CD14-positive monocyte (primary cell): ENCODE measurements at regions of chr16 and their contacts with region 1.

Region 1: GRCh38 chr16:30698139-30698815 is 694 bp upstream of the SRCAP start:
- DNase-seq: peak; percentile 95 to 98 (median 97)
- H3K4me3 ChIP-seq: peak overlapping the region; percentile 91 to 98 (median 94)
- H3K4me3 Mint-ChIP-seq: peak overlapping the region; percentile 92 to 99
- H3K27ac ChIP-seq: peak overlapping the region; percentile 96 to 97
- H3K27ac Mint-ChIP-seq: peak overlapping the region; percentile 99 to 100 (median 100)
- H3K4me1 ChIP-seq: peaks cover 25 to 42% of the 10 kb centered on the region in 2 donors
- H3K4me1 Mint-ChIP-seq: peaks cover 40% of the 10 kb centered on the region
- H3K27me3 ChIP-seq: no peaks in the 10 kb centered on the region
- H3K27me3 Mint-ChIP-seq: peaks cover 0 to 1% (median 0%) of the 10 kb centered on the region in 3 donors
- CTCF ChIP-seq: no peak

Region 2: GRCh38 chr16:30650369-30651123 is 47.7 kb before region 1 on chr16 and contains the start of gene PRR14:
- intact Hi-C with region 1: loop called in 1 of 2 experiments (anchors 2 kb)
- DNase-seq: peak; percentile 100
- H3K4me3 ChIP-seq: peak within 1 kb of the TSS; percentile 76 to 90 (median 84)
- H3K4me3 Mint-ChIP-seq: peak within 1 kb of the TSS; percentile 96 to 98
- H3K27ac ChIP-seq: peak within 1 kb of the TSS; percentile 97
- H3K27ac Mint-ChIP-seq: peak within 1 kb of the TSS; percentile 95 to 99 (median 98)
- H3K4me1 ChIP-seq: peaks cover 21 to 23% of the 10 kb centered on the region in 2 donors
- H3K4me1 Mint-ChIP-seq: peaks cover 28% of the 10 kb centered on the region
- H3K27me3 ChIP-seq: no peaks in the 10 kb centered on the region
- H3K27me3 Mint-ChIP-seq: peaks cover 0 to 3% (median 1%) of the 10 kb centered on the region in 3 donors
- CTCF ChIP-seq: no peak
- polyA plus RNA-seq, gene PRR14: 6.1 to 32.6 (median 10.4) TPM

Region 3: DNA sequence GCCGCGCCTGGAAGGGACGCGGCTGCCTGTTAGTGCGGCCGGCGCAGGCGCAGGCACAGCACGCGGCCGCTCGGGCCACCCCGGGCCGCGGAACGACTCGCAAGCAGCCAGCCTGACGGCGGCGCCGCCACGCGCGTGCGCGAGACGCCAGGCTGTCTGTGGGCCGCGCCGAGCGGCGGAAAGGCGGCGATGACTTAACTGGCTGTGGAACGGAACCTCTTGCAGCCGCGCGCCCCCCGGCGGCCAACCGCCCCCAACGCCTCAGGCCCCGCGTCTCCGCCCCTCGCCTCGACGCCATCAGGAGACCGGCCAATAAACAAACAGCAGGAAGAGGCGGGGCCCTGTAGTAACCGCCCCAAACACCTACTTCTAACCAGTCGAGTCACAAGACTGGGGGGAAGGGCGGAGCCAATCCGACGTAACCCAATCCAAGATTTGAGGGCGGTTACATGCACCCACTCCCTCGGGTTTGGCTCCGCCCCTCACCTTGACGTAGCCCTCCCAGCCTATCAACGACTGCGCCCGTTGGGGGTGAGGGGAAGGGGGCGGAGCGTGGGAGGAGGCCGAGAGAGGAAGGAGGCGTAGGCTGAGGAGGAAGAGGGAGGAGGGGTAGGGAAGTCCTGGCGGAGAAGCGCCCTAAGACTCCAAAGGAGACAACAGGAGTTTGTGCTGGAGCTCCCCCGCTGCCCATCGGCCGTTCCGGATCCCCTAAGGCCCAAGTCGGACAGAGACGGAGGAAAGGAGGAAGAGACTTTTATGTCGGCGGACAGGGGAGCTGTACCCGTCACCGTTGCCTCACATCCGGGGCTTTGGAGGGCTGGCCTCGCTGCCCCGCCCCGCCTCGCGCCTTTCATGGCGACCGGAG is 40.2 kb before region 1 on chr16 and contains the start of gene FBRS:
- intact Hi-C with region 1: loop called (anchors 1 to 2 kb)
- DNase-seq: peak; percentile 100
- H3K4me3 ChIP-seq: peak within 1 kb of the TSS; percentile 81 to 99 (median 86)
- H3K4me3 Mint-ChIP-seq: peak within 1 kb of the TSS; percentile 90 to 99
- H3K27ac ChIP-seq: peak within 1 kb of the TSS; percentile 93 to 99
- H3K27ac Mint-ChIP-seq: peak within 1 kb of the TSS; percentile 100
- H3K4me1 ChIP-seq: peaks cover 33 to 45% of the 10 kb centered on the region in 2 donors
- H3K4me1 Mint-ChIP-seq: peaks cover 38% of the 10 kb centered on the region
- H3K27me3 ChIP-seq: no peaks in the 10 kb centered on the region
- H3K27me3 Mint-ChIP-seq: peaks cover 0 to 1% (median 0%) of the 10 kb centered on the region in 3 donors
- CTCF ChIP-seq: peak; percentile 68
- polyA plus RNA-seq, gene FBRS: 1.4 to 44.8 (median 2.1) TPM

Region 4: GRCh38 chr16:30715737-30716445 is 17.6 kb after region 1 on chr16:
- intact Hi-C with region 1: loop called in 1 of 2 experiments (anchors 2 kb)
- DNase-seq: peak; percentile 88 to 95 (median 94)
- H3K4me3 ChIP-seq: peak overlapping the region in 1 of 3 experiments; percentile 16
- H3K4me3 Mint-ChIP-seq: peak overlapping the region; percentile 2 to 67
- H3K27ac ChIP-seq: peak overlapping the region; percentile 92 to 98
- H3K27ac Mint-ChIP-seq: peak overlapping the region; percentile 97 to 99 (median 99)
- H3K4me1 ChIP-seq: peaks cover 39 to 41% of the 10 kb centered on the region in 2 donors
- H3K4me1 Mint-ChIP-seq: peaks cover 33% of the 10 kb centered on the region
- H3K27me3 ChIP-seq: no peaks in the 10 kb centered on the region
- H3K27me3 Mint-ChIP-seq: peaks cover 0 to 7% (median 0%) of the 10 kb centered on the region in 3 donors
- CTCF ChIP-seq: no peak

Region 5: GRCh38 chr16:30747799-30748634 is 49.7 kb after region 1 on chr16 and contains the start of gene PHKG2:
- intact Hi-C with region 1: loop called in 1 of 2 experiments (anchors 5 kb)
- DNase-seq: peak; percentile 97 to 99 (median 98)
- H3K4me3 ChIP-seq: peak within 1 kb of the TSS; percentile 48 to 79 (median 69)
- H3K4me3 Mint-ChIP-seq: peak within 1 kb of the TSS; percentile 92 to 93
- H3K27ac ChIP-seq: peak within 1 kb of the TSS; percentile 69 to 88
- H3K27ac Mint-ChIP-seq: peak within 1 kb of the TSS; percentile 80 to 95 (median 90)
- H3K4me1 ChIP-seq: peaks cover 23 to 24% of the 10 kb centered on the region in 2 donors
- H3K4me1 Mint-ChIP-seq: peaks cover 27% of the 10 kb centered on the region
- H3K27me3 ChIP-seq: no peaks in the 10 kb centered on the region
- H3K27me3 Mint-ChIP-seq: no peaks in the 10 kb centered on the region
- CTCF ChIP-seq: no peak
- polyA plus RNA-seq, gene PHKG2: 45.4 to 115 (median 54.2) TPM